SK-N-SH (cell line): ENCODE measurements at regions of chr15 and their contacts with region 1.

Region 1: GRCh38 chr15:63610200-63610841 is 13.1 kb downstream of the FBXL22 start:
- DNase-seq: peak; percentile 79
- H3K4me3 ChIP-seq: no peak overlapping the region; a peak in 1 of 4 replicates
- H3K27ac ChIP-seq: peak overlapping the region; percentile 60 to 61
- H3K4me1 ChIP-seq: peaks cover 10 to 20% of the 10 kb centered on the region in 2 experiments
- H3K27me3 ChIP-seq: no peaks in the 10 kb centered on the region
- CTCF ChIP-seq: peak; percentile 78
- EP300 ChIP-seq: no peak
- RAD21 ChIP-seq: peak; percentile 87

Region 2: DNA sequence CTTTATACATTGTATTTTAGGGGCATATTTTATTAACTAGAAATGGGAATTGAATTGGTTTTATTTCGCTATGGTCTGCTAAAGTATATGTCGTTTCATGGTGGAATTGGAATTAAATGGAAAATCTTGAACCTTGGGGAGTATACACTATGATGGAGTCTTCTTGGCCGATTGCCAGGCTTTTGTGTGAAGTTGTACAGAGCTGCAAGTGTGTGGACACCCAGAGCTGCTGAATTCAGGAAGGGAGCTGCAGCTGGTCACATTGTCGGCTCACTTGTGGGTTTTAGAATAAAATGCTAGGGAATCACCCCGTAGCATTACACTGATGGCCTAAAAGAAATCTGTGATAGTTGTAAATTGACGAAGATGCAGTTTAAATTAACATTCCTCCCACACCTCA is 70.8 kb before region 1 on chr15:
- CTCF ChIA-PET with region 1: no interaction called
- POLR2A ChIA-PET with region 1: no interaction called
- DNase-seq: no peak
- H3K4me3 ChIP-seq: no peak overlapping the region
- H3K27ac ChIP-seq: no peak overlapping the region
- H3K4me1 ChIP-seq: no peaks in the 10 kb centered on the region; a peak in 3 of 4 replicates
- H3K27me3 ChIP-seq: no peaks in the 10 kb centered on the region
- CTCF ChIP-seq: no peak
- EP300 ChIP-seq: no peak
- RAD21 ChIP-seq: no peak

Region 3: GRCh38 chr15:63582718-63583426 is 27.4 kb before region 1 on chr15:
- CTCF ChIA-PET with region 1: no interaction called
- POLR2A ChIA-PET with region 1: no interaction called
- DNase-seq: no peak
- H3K4me3 ChIP-seq: no peak overlapping the region
- H3K27ac ChIP-seq: peak overlapping the region in 1 of 2 experiments; percentile 62; a peak in 2 of 4 replicates
- H3K4me1 ChIP-seq: peaks cover 0 to 10% of the 10 kb centered on the region in 2 experiments; a peak in 3 of 4 replicates
- H3K27me3 ChIP-seq: no peaks in the 10 kb centered on the region
- CTCF ChIP-seq: no peak
- EP300 ChIP-seq: no peak
- RAD21 ChIP-seq: no peak

Region 4: DNA sequence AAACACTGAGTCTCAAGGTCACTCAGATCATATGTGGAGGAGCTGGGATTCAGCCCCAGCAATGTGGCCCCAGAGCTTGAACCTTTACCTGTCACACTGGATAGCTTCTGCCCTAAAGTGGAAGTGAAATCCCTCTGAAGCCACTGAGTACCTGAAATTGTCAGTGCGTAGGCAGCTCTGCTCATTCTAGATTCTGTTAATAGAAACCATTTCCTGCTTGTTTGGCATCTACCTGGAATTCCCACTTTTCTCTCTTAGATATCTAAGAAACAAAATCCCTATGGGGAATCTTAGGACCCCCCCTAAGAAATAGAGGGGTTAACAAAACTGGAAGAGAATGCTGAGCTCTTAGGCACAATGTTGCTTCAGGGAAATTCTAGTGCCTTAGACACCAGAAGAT is 16.6 kb after region 1 on chr15:
- CTCF ChIA-PET with region 1: interaction called, 11 read pairs
- POLR2A ChIA-PET with region 1: no interaction called
- DNase-seq: no peak
- H3K4me3 ChIP-seq: no peak overlapping the region
- H3K27ac ChIP-seq: no peak overlapping the region
- H3K4me1 ChIP-seq: no peaks in the 10 kb centered on the region
- H3K27me3 ChIP-seq: no peaks in the 10 kb centered on the region
- CTCF ChIP-seq: no peak
- EP300 ChIP-seq: no peak
- RAD21 ChIP-seq: no peak

Region 5: GRCh38 chr15:63638839-63639238 is 28.5 kb after region 1 on chr15:
- CTCF ChIA-PET with region 1: interaction called, 10 read pairs
- POLR2A ChIA-PET with region 1: no interaction called
- DNase-seq: no peak
- H3K4me3 ChIP-seq: no peak overlapping the region
- H3K27ac ChIP-seq: no peak overlapping the region; a peak in 1 of 4 replicates
- H3K4me1 ChIP-seq: no peaks in the 10 kb centered on the region
- H3K27me3 ChIP-seq: no peaks in the 10 kb centered on the region
- CTCF ChIP-seq: no peak
- EP300 ChIP-seq: no peak
- RAD21 ChIP-seq: no peak

Region 6: GRCh38 chr15:63891079-63891767 is 280.9 kb after region 1 on chr15:
- CTCF ChIA-PET with region 1: interaction called, 10 read pairs
- POLR2A ChIA-PET with region 1: no interaction called
- DNase-seq: peak; percentile 80
- H3K4me3 ChIP-seq: no peak overlapping the region; a peak in 1 of 4 replicates
- H3K27ac ChIP-seq: no peak overlapping the region
- H3K4me1 ChIP-seq: no peaks in the 10 kb centered on the region; a peak in 1 of 4 replicates
- H3K27me3 ChIP-seq: no peaks in the 10 kb centered on the region
- CTCF ChIP-seq: peak; percentile 90
- EP300 ChIP-seq: no peak
- RAD21 ChIP-seq: peak; percentile 80

Region 7: DNA sequence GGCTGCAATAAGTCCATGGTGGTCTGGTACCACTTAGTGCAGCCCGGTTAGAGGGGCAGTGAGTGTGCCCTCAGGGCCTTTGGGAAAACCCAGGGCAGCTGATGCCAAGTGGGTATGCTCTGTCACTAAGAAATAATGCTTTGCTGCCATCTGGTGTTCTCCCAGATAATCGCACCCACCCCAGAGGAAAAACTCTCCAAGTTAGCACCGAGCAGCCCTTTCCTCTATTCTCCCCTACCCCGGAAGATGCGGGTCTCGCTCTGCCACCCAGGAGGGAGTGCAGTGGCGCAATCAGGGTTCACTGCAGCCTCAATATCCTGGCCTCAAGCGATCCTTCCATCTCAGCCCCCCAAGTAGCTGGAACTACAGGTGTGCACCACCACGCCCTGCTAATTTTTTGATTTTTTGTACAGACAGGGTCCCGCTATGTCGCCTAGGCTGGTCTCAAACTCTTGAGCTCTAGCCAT is 457.3 kb after region 1 on chr15:
- CTCF ChIA-PET with region 1: interaction called, 84 read pairs
- POLR2A ChIA-PET with region 1: no interaction called
- DNase-seq: peak; percentile 90
- H3K4me3 ChIP-seq: no peak overlapping the region; a peak in 1 of 4 replicates
- H3K27ac ChIP-seq: no peak overlapping the region
- H3K4me1 ChIP-seq: peaks cover 0 to 14% of the 10 kb centered on the region in 2 experiments; a peak in 2 of 4 replicates
- H3K27me3 ChIP-seq: no peaks in the 10 kb centered on the region
- CTCF ChIP-seq: peak; percentile 76
- EP300 ChIP-seq: peak in 1 of 2 experiments; percentile 63; a peak in 2 of 4 replicates
- RAD21 ChIP-seq: peak; percentile 95